ENCODE measurements at regions of chr2 and their contacts with region 1.

Region 1: DNA sequence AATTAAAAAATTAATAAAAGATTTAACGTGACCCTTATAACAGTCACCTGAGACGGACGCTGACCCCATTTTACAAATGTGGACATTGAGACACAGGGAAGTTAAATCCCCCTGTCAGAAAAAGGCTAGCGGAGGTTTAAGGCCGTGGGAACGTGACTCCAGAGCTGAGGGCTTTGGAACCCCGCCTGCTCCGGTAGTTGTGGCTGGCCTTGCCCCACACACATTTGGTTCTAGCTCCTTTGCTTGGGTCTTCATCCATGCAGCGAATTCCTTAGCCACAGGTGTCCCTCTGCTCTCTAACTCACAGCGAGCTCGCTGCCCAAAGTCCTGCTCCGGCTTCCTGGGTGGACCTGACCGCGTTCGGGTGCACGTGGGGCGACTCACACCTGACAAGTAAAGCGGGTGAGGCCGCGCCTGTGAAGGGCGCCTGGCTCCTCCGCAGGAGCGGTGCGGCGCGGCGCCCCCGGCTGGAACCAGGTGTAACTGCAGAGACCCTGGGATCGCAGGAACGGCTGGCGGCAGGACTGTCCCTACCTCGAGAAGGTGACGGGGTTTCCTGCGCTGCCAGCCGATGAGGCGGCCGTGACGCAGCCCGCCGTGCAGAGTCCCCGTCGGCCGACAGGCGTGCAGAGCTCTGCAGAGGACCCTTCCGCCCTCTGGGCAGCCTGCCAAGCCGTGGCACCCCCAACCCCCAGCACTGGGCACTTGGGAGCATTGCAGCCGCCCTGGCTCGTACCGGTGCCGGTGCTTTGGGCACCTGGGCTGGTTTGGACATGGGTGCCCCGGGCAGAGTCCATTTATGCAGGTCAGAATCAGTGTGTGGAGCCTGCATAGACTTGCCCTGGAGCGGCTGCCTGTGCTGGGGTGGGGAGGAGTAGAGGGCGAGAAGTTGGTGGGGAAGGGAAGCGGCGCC is 2.4 kb upstream of the PROC start:
- DNase-seq: peak; percentile 91
- H3K4me3 Mint-ChIP-seq: peak overlapping the region; percentile 63
- H3K27ac Mint-ChIP-seq: peak overlapping the region; percentile 61
- H3K4me1 Mint-ChIP-seq: peaks cover 34% of the 10 kb centered on the region
- H3K27me3 Mint-ChIP-seq: peaks cover 21% of the 10 kb centered on the region

Region 2: GRCh38 chr2:127064642-127065250 is 351.1 kb before region 1 on chr2:
- CTCF ChIA-PET with region 1: no interaction called
- intact Hi-C with region 1: loop called (anchors 5 kb)
- DNase-seq: peak; percentile 85
- H3K4me3 Mint-ChIP-seq: no peak overlapping the region
- H3K27ac Mint-ChIP-seq: peak overlapping the region; percentile 75
- H3K4me1 Mint-ChIP-seq: peaks cover 26% of the 10 kb centered on the region
- H3K27me3 Mint-ChIP-seq: no peaks in the 10 kb centered on the region

Region 3: GRCh38 chr2:127197475-127198385 is 218.1 kb before region 1 on chr2:
- CTCF ChIA-PET with region 1: interaction called, 6 read pairs
- intact Hi-C with region 1: loop called (anchors 1 kb)
- DNase-seq: peak; percentile 80
- H3K4me3 Mint-ChIP-seq: peak overlapping the region; percentile 69
- H3K27ac Mint-ChIP-seq: no peak overlapping the region
- H3K4me1 Mint-ChIP-seq: peaks cover 5% of the 10 kb centered on the region
- H3K27me3 Mint-ChIP-seq: no peaks in the 10 kb centered on the region

Region 4: DNA sequence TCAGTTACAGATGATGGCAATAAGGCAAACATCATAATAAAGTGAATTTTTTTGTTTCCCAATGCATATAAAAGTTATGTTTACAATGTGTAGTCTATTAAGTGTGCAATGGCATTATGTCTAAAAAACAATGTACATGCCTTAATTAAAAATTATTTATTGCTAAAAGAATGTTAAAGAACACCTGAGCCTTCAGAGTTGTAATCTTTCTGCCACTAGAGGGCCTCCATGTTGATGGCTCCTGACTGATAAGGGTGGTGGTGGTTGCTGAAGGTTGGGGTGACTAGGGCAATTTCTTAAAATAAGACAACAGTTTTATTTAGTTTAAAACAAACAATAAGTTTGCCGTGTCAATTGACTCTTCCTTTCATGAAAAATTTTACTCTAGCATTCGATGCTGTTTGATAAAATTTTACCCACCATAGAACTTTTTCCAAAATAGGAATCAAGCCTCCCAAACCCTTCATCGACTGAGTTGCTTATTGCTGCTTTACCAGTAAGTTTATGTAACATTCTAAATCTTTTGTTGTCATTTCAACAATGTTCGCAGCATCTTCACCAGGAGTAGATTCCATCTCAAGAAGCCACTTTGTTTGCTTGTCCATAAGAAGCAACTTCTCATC is 60.4 kb before region 1 on chr2:
- CTCF ChIA-PET with region 1: interaction called, 4 read pairs
- intact Hi-C with region 1: loop called (anchors 1 kb)
- DNase-seq: peak; percentile 35
- H3K4me3 Mint-ChIP-seq: no peak overlapping the region
- H3K27ac Mint-ChIP-seq: no peak overlapping the region
- H3K4me1 Mint-ChIP-seq: peaks cover 46% of the 10 kb centered on the region
- H3K27me3 Mint-ChIP-seq: no peaks in the 10 kb centered on the region

Region 5: DNA sequence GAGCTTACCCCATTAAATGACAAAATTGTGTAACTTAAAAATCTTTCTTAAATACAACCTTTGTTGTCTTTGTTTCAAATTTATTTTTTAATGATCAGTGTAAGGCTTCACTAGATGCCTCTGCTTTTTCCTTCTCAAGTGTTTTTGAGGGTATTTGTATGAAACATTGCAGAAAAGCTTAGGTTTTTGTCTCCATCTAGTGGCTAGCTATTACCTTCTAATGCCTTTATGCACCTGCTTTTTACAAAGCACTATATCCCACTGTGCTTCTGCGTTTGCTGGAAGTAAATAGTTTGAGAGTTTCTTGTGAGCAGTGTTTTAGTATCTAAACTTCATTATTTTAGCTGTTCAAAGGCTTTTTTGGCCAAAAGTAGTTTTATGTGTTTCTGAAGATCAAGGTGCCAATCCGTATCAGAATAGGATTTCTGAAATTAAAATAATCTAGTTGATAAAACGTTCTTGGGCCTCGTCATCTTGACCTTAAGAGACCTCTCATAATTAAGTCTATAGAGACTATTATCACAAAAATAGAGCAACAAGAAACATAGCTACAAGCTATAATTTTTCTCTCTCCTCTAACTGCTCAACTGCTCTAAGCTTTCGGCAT is 63.5 kb after region 1 on chr2:
- CTCF ChIA-PET with region 1: interaction called, 15 read pairs
- intact Hi-C with region 1: no loop called
- DNase-seq: no peak
- H3K4me3 Mint-ChIP-seq: no peak overlapping the region
- H3K27ac Mint-ChIP-seq: no peak overlapping the region
- H3K4me1 Mint-ChIP-seq: no peaks in the 10 kb centered on the region
- H3K27me3 Mint-ChIP-seq: no peaks in the 10 kb centered on the region

Region 6: DNA sequence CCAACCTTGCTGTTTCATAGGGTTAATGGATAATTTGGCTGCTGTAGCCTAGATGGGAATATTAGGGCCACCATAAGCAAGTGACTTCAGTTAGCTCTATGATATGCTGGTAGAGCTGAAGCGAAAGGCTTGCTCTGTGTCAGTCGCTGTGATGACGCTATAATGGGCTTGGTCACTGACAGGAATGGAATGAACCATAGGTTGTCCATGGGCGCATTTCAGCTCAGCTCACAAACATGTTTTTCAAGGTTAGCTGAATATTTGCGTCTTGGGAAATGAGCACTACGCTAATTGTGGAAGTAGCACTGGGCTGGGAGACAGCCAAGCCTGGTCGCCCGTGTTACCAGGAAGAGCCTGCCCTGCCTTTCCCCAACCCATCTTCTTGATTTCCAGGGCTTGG is 116.4 kb after region 1 on chr2:
- CTCF ChIA-PET with region 1: no interaction called
- intact Hi-C with region 1: no loop called
- DNase-seq: no peak
- H3K4me3 Mint-ChIP-seq: no peak overlapping the region
- H3K27ac Mint-ChIP-seq: no peak overlapping the region
- H3K4me1 Mint-ChIP-seq: peaks cover 6% of the 10 kb centered on the region
- H3K27me3 Mint-ChIP-seq: no peaks in the 10 kb centered on the region

Region 7: GRCh38 chr2:127701193-127701650 is 285.4 kb after region 1 on chr2 and contains the start of gene SFT2D3:
- CTCF ChIA-PET with region 1: no interaction called
- intact Hi-C with region 1: loop called (anchors 5 kb)
- DNase-seq: peak; percentile 94
- H3K4me3 Mint-ChIP-seq: peak within 1 kb of the TSS; percentile 88
- H3K27ac Mint-ChIP-seq: peak within 1 kb of the TSS; percentile 95
- H3K4me1 Mint-ChIP-seq: peaks cover 38% of the 10 kb centered on the region
- H3K27me3 Mint-ChIP-seq: no peaks in the 10 kb centered on the region
- total RNA-seq, gene SFT2D3: 3.1 to 3.3 TPM